ENCODE measurements at regions of chr19 and their contacts with region 1.

Region 1: GRCh38 chr19:29587518-29587986 is 18.5 kb upstream of the POP4 start:
- DNase-seq: peak; percentile 86
- H3K4me3 Mint-ChIP-seq: no peak overlapping the region
- H3K27ac Mint-ChIP-seq: peak overlapping the region; percentile 64
- H3K4me1 Mint-ChIP-seq: peaks cover 22% of the 10 kb centered on the region
- H3K27me3 Mint-ChIP-seq: peaks cover 23% of the 10 kb centered on the region

Region 2: DNA sequence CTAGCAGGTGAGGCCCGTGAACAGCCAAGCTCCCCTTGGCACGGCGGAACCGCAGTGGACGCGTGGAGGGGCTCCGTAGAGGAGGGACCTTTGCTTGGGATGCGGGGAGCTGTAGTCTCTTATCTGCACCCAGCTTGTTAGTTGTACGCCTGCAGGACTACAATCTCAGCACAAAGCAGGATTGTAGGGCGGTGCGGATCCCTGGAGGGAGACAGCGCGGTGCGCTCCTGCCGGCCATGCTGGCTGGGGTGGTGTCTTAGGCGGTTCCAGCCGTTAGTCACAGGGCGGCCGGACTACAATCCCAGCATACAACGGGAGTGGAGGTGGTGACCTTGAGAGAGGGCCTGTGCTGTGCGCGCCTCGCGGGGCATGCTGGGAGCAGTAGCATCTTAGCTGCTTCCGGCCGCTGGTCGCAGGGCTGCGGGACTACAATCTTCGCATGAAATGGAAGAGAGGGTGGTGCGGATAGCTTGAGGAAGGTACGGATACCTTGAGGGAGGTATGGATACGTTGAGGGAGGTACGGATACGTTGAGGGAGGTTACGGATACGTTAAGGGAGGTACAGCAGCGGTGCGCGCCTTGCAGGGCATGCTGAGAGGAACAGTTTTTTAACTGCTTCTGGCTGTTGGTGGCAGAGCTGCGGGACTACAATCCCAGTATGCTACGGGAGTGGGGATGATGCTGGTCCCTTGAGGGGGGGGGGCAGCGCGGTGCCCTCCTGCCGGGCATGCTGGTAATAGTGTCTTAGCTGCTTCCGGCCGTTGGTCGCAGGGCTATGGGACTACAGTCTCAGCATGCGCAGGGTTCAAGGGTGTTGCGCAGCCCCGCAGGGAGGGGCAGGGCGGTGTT is 1793.7 kb before region 1 on chr19:
- CTCF ChIA-PET with region 1: no interaction called
- POLR2A ChIA-PET with region 1: no interaction called
- intact Hi-C with region 1: loop called (anchors 10 kb)
- DNase-seq: peak; percentile 94
- H3K4me3 Mint-ChIP-seq: peak overlapping the region; percentile 94
- H3K27ac Mint-ChIP-seq: peak overlapping the region; percentile 89
- H3K4me1 Mint-ChIP-seq: peaks cover 16% of the 10 kb centered on the region
- H3K27me3 Mint-ChIP-seq: no peaks in the 10 kb centered on the region

Region 3: GRCh38 chr19:29212648-29213573 is 374.6 kb before region 1 on chr19 and contains the start of gene UQCRFS1:
- CTCF ChIA-PET with region 1: no interaction called
- POLR2A ChIA-PET with region 1: no interaction called
- intact Hi-C with region 1: loop called (anchors 5 kb)
- DNase-seq: peak; percentile 98
- H3K4me3 Mint-ChIP-seq: peak within 1 kb of the TSS; percentile 95
- H3K27ac Mint-ChIP-seq: peak within 1 kb of the TSS; percentile 94
- H3K4me1 Mint-ChIP-seq: peaks cover 42% of the 10 kb centered on the region
- H3K27me3 Mint-ChIP-seq: peaks cover 2% of the 10 kb centered on the region
- total RNA-seq, gene UQCRFS1: 42.0 to 43.9 TPM

Region 4: GRCh38 chr19:29381353-29382203 is 206.0 kb before region 1 on chr19:
- CTCF ChIA-PET with region 1: no interaction called
- POLR2A ChIA-PET with region 1: no interaction called
- intact Hi-C with region 1: no loop called
- DNase-seq: no peak
- H3K4me3 Mint-ChIP-seq: no peak overlapping the region
- H3K27ac Mint-ChIP-seq: no peak overlapping the region
- H3K4me1 Mint-ChIP-seq: no peaks in the 10 kb centered on the region
- H3K27me3 Mint-ChIP-seq: peaks cover 11% of the 10 kb centered on the region

Region 5: GRCh38 chr19:29467824-29468401 is 119.6 kb before region 1 on chr19:
- CTCF ChIA-PET with region 1: no interaction called
- POLR2A ChIA-PET with region 1: no interaction called
- intact Hi-C with region 1: loop called (anchors 10 kb)
- DNase-seq: peak; percentile 47
- H3K4me3 Mint-ChIP-seq: no peak overlapping the region
- H3K27ac Mint-ChIP-seq: no peak overlapping the region
- H3K4me1 Mint-ChIP-seq: peaks cover 3% of the 10 kb centered on the region
- H3K27me3 Mint-ChIP-seq: peaks cover 23% of the 10 kb centered on the region

Region 6: GRCh38 chr19:29528350-29528945 is 59.1 kb before region 1 on chr19:
- CTCF ChIA-PET with region 1: interaction called, 6 read pairs
- POLR2A ChIA-PET with region 1: no interaction called
- intact Hi-C with region 1: loop called (anchors 5 kb)
- DNase-seq: peak; percentile 82
- H3K4me3 Mint-ChIP-seq: peak overlapping the region; percentile 29
- H3K27ac Mint-ChIP-seq: no peak overlapping the region
- H3K4me1 Mint-ChIP-seq: peaks cover 34% of the 10 kb centered on the region
- H3K27me3 Mint-ChIP-seq: peaks cover 68% of the 10 kb centered on the region

Region 7: GRCh38 chr19:29564574-29565005 is 23.0 kb before region 1 on chr19:
- CTCF ChIA-PET with region 1: interaction called, 3 read pairs
- POLR2A ChIA-PET with region 1: no interaction called
- intact Hi-C with region 1: loop called (anchors 1 kb)
- DNase-seq: no peak
- H3K4me3 Mint-ChIP-seq: no peak overlapping the region
- H3K27ac Mint-ChIP-seq: no peak overlapping the region
- H3K4me1 Mint-ChIP-seq: peaks cover 14% of the 10 kb centered on the region
- H3K27me3 Mint-ChIP-seq: peaks cover 36% of the 10 kb centered on the region

Region 8: DNA sequence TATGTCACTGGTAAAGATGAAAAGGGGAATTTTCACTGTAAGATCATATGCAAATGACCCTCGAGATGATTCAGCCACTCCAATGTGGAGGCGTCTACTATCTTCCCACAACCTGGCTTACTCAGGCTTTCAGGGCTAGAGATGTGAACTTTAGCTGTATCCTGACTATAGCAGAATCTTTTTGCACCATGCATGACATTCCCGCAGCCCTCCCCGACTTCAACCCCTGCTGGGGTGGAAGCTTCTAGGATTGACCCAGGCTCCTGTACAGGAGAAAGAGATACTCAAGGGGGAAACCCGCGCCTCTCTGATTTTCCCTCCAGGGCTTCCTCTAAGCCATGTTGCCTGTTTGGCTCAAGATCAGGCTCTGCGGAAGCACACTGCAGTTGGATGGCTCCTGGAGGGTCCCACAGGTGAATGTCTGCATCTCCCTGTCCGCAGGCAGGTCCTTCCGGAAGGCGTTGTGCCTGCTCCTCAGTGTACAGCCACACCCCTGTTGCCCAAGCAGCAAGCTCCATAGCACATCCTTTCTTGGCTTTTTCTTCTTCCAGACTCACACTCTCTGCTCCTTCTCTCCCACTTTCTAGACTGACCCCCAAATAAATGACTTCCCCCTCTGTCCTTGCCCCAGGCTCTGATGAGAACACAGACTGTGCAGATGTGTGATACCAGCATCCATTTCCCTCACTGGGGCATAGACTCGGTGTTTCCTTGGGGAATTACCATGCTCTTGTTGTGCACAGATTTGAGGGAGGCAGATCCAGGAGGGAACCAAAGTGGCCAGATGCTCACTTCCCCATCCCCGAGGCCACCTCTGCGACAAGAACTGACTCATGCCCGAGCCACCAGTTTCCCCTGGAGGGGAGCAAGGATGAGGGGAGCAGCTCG is 10.5 kb before region 1 on chr19:
- CTCF ChIA-PET with region 1: interaction called, 4 read pairs
- POLR2A ChIA-PET with region 1: no interaction called
- intact Hi-C with region 1: loop called (anchors 1 kb)
- DNase-seq: peak; percentile 73
- H3K4me3 Mint-ChIP-seq: no peak overlapping the region
- H3K27ac Mint-ChIP-seq: no peak overlapping the region
- H3K4me1 Mint-ChIP-seq: peaks cover 23% of the 10 kb centered on the region
- H3K27me3 Mint-ChIP-seq: peaks cover 63% of the 10 kb centered on the region

Region 9: DNA sequence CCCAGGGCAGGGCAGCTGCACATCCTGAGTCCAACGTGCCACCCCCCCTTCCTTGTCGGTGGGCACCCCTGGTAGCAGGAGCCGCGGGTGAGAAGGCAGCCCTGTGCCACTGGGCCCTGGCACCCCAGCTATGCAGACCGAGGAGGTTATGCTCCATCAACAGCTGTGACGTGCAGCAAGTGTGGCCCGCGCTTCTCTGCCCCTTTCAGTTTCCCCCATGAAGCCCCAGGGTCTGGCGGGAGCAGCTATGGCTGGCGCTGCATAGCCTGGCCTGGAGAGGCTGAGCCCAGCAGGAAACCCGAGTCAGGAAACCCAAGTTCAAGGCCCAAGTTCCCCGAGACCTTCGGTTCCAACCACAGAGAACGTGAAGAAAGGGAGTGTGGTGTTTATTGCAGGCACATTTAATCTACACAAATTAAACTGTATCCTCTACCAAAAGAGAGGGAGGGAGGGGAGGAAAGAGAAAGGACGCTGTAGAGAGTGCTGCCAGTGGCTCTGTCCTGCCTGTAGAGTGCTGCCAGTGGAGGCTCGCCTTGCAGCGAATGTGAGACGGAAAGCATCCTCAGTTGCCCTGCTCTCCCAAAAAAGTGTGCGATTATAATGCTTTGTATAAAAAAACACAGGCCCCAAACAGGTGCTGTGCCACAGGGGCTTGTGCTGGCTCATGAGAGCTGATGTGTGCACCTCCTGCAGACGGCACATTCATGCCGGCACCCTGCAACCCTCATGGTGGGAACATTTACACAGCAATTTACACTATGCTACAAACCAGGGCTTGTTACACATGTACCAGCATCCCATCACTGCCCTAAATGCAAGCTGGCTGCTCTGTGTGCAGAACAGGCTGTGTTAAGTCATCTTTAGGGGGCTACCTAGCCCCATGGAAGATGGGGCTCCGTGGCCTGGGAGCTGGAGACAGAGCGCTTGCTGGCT is 34.9 kb after region 1 on chr19:
- CTCF ChIA-PET with region 1: no interaction called
- POLR2A ChIA-PET with region 1: no interaction called
- intact Hi-C with region 1: no loop called
- DNase-seq: peak; percentile 32
- H3K4me3 Mint-ChIP-seq: no peak overlapping the region
- H3K27ac Mint-ChIP-seq: no peak overlapping the region
- H3K4me1 Mint-ChIP-seq: peaks cover 43% of the 10 kb centered on the region
- H3K27me3 Mint-ChIP-seq: no peaks in the 10 kb centered on the region